ENCODE measurements at regions of chr15 and their contacts with region 1.

Region 1: DNA sequence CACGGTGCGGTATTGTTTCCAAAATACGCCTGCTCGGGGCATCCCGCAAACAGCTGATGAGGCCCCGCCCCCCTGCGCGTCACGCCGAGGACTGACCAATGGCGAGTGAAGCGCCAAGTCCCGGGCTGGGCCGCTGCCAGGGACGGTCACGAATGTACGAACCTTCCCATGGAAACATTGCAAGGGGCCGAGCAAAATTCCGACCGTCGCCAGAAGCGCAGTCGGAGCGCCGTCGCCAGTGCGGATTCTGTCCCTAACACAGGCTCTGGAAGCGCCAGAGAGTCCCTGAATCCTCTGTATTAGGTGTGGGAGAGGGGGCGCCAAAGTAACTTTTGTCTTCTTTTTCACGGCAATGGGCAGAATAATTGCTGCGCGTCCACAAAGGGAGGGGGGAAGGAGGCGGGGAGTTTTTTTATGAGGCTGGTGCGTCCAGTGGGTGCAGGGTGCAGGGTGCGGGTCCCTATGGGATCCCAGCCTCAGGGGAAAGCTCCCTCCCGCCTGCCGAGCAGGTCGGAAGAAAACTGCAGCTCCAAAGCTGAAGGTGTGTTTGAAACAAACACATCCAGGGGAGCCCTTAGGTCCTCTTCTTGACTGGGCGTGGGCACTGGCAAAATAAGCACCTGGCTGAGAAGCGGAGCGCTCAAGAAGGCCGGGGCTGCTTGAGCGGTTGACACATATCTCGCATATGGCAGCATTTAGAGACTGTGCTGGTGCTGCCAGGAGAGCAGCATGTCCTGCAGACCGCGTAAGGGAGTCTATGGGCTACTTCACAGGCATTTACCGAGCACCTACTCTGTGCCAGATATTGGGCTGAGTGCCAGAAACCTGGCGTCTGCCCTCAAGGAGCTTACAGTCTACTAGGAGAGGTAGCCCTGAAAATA is at the start of gene BMF:
- DNase-seq: peak; percentile 87 to 98 (median 90)
- ATAC-seq: peak; percentile 89
- H3K4me3 ChIP-seq: peak within 1 kb of the TSS; percentile 44
- H3K4me3 Mint-ChIP-seq: peak within 1 kb of the TSS; percentile 89 to 99 (median 94)
- H3K27ac ChIP-seq: peak within 1 kb of the TSS; percentile 52
- H3K27ac Mint-ChIP-seq: peak within 1 kb of the TSS; percentile 69 to 92 (median 80)
- H3K4me1 ChIP-seq: peaks cover 24 to 32% of the 10 kb centered on the region in 2 donors
- H3K4me1 Mint-ChIP-seq: peaks cover 35 to 56% (median 49%) of the 10 kb centered on the region in 7 donors
- H3K27me3 ChIP-seq: no peaks in the 10 kb centered on the region
- H3K27me3 Mint-ChIP-seq: peaks cover 0 to 19% (median 8%) of the 10 kb centered on the region in 5 donors
- total RNA-seq, gene BMF: 7.7 to 31.1 (median 19.6) TPM

Region 2: GRCh38 chr15:39934397-39935071 is 174.6 kb before region 1 on chr15:
- CTCF ChIA-PET with region 1: no interaction called
- POLR2A ChIA-PET with region 1: no interaction called
- intact Hi-C with region 1: loop called in 1 of 2 experiments (anchors 5 kb)
- DNase-seq: peak in 5 of 9 donors; percentile 5 to 14 (median 9)
- ATAC-seq: no peak
- H3K4me3 ChIP-seq: peak overlapping the region; percentile 76
- H3K4me3 Mint-ChIP-seq: peak overlapping the region; percentile 86 to 95 (median 89)
- H3K27ac ChIP-seq: peak overlapping the region; percentile 78
- H3K27ac Mint-ChIP-seq: peak overlapping the region; percentile 20 to 91 (median 64)
- H3K4me1 ChIP-seq: peaks cover 14 to 16% of the 10 kb centered on the region in 2 donors
- H3K4me1 Mint-ChIP-seq: peaks cover 28 to 50% (median 33%) of the 10 kb centered on the region in 7 donors
- H3K27me3 ChIP-seq: no peaks in the 10 kb centered on the region
- H3K27me3 Mint-ChIP-seq: peaks cover 0 to 6% (median 0%) of the 10 kb centered on the region in 5 donors

Region 3: DNA sequence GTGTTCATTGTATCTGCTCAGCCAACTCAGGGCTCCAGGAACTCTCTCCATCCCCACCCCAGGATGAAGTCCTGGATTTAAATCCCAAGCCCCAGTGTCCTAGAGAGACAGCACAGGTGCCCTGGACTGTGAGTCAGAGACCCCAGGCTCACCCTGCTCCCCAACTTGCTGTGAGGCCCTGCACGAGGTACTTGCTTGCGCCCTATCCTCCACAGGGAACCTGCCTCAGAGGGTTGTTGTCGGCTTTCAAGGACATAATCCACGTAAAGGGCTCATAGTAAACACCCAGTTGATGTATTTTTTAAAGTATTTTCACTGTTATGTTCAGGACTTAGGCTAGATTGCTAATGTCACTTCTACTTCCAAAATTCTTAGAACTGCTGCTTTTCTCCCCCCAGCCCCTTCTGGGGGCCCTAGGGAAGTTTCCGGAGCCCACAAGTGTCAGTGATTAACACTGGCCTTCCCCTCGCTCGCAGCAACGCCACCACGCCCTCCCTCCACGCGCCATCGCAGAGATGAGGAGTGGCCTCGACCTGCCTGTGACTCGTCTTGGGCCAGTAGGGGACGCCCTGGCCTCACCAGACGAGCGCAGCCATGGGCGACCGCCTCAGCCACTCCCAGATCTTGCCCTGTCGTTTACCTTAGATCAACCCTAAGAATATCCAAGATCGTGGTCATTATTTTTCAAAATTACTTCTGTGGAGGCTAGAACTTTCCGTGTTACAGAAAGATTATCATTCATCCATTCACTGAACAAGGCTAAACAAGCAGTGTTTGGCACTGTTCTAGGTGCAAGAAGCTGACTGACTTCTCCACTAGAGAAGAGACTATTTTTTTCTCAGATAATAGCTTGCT is 64.2 kb before region 1 on chr15:
- CTCF ChIA-PET with region 1: interaction called, 69 read pairs
- POLR2A ChIA-PET with region 1: interaction called, 18 read pairs
- intact Hi-C with region 1: loop called (anchors 1 kb)
- DNase-seq: peak; percentile 57 to 85 (median 74)
- ATAC-seq: peak; percentile 94
- H3K4me3 ChIP-seq: no peak overlapping the region
- H3K4me3 Mint-ChIP-seq: peak overlapping the region; percentile 16 to 76 (median 68)
- H3K27ac ChIP-seq: peak overlapping the region; percentile 53
- H3K27ac Mint-ChIP-seq: peak overlapping the region; percentile 34 to 88 (median 83)
- H3K4me1 ChIP-seq: peaks cover 40 to 50% of the 10 kb centered on the region in 2 donors
- H3K4me1 Mint-ChIP-seq: peaks cover 36 to 71% (median 62%) of the 10 kb centered on the region in 7 donors
- H3K27me3 ChIP-seq: no peaks in the 10 kb centered on the region
- H3K27me3 Mint-ChIP-seq: no peaks in the 10 kb centered on the region

Region 4: DNA sequence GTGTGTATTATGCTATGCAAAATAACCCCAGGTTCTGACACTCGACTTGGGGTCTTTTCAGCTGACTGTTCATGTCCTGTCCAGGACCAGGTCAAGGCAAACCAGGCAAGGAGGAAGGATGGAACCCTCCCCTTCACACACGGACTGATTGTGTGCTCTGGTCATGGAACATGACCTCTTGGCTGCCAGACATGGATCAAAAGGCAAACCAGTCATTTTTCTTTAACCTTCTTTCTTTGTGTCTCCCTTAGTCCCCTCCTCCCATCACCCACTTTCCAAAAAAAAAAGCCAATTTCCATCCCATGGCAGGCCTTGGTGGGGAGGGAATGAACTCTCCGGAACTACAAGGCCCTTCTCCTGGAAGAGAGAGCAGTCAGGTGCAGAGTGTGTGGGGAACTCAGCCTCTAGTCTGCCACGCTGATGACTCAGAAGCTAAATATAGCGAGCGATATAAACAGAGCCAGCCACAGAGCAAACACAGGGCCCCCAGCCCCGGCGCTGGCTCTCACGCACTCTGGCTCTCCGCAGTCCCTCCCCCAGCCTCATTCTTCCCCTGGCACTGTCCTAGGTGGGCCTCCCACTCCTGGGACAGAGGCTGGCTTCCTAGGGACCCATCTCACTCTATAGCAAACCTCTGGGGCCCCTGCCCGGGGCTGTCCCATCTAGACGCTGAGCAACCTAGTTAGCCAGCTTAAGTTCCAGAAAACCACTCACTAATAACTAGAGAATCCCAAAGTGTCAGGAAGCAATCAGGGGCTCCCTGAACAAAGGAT is 10.4 kb before region 1 on chr15:
- CTCF ChIA-PET with region 1: interaction called, 20 read pairs
- POLR2A ChIA-PET with region 1: interaction called, 11 read pairs
- intact Hi-C with region 1: loop called (anchors 1 kb)
- DNase-seq: peak in 5 of 9 donors; percentile 20 to 76 (median 48)
- ATAC-seq: peak; percentile 90
- H3K4me3 ChIP-seq: no peak overlapping the region
- H3K4me3 Mint-ChIP-seq: peak overlapping the region; percentile 55 to 86 (median 66)
- H3K27ac ChIP-seq: peak overlapping the region; percentile 14
- H3K27ac Mint-ChIP-seq: peak overlapping the region; percentile 28 to 97 (median 81)
- H3K4me1 ChIP-seq: peaks cover 35 to 37% of the 10 kb centered on the region in 2 donors
- H3K4me1 Mint-ChIP-seq: peaks cover 33 to 86% (median 56%) of the 10 kb centered on the region in 7 donors
- H3K27me3 ChIP-seq: no peaks in the 10 kb centered on the region
- H3K27me3 Mint-ChIP-seq: peaks cover 0 to 1% (median 0%) of the 10 kb centered on the region in 5 donors

Region 5: DNA sequence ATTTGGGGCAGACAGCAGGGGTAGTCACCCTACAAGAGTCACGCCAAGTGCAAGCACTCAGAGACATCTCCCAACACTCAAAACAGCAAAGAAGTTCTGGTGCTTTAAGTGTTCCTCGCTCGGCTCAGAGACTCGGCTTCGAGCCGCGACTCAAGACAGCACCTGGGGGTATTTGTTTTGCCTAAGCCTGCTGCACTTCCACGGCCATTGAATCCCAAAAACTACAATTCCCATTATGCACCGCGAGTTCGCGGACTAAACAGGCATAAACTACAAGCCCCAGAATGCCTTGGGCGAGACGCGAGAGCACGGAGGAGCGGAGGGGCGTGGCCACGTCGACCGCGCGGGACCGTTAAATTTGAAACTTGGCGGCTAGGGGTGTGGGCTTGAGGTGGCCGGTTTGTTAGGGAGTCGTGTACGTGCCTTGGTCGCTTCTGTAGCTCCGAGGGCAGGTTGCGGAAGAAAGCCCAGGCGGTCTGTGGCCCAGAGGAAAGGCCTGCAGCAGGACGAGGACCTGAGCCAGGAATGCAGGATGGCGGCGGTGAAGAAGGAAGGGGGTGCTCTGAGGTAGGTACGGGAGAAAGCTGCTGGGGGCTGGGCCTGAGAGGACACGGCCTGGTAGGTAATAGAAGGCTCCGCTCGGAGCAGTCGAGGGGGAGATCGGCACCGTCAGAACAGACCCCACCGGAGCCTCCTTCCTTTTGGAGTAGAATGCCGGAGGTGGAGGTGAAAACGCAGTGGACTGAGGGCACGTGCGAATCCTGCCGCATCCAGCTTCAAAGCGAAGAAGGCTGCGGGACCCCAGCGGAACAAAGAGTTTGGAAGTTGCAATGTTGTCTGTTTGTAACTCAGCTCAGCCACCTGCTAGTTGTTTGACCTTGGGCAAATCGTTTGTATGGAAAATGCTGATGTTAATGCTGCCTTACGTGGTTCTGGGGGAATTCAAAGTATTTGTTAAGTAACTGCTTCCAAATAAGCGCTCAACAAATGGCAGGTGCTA is 51.9 kb after region 1 on chr15 and contains the start of gene BUB1B:
- CTCF ChIA-PET with region 1: interaction called, 3 read pairs
- POLR2A ChIA-PET with region 1: interaction called, 3 read pairs
- intact Hi-C with region 1: loop called (anchors 1 kb)
- DNase-seq: peak; percentile 79 to 94 (median 92)
- ATAC-seq: peak; percentile 100
- H3K4me3 ChIP-seq: peak within 1 kb of the TSS; percentile 80
- H3K4me3 Mint-ChIP-seq: peak within 1 kb of the TSS in 2 of 10 donors; percentile 15 to 51
- H3K27ac ChIP-seq: peak within 1 kb of the TSS; percentile 29
- H3K27ac Mint-ChIP-seq: no peak within 1 kb of the TSS
- H3K4me1 ChIP-seq: peaks cover 0 to 7% of the 10 kb centered on the region in 2 donors
- H3K4me1 Mint-ChIP-seq: peaks cover 0 to 12% (median 0%) of the 10 kb centered on the region in 7 donors
- H3K27me3 ChIP-seq: no peaks in the 10 kb centered on the region
- H3K27me3 Mint-ChIP-seq: no peaks in the 10 kb centered on the region
- total RNA-seq, gene BUB1B: 0.41 to 55.7 (median 1.2) TPM

Region 6: DNA sequence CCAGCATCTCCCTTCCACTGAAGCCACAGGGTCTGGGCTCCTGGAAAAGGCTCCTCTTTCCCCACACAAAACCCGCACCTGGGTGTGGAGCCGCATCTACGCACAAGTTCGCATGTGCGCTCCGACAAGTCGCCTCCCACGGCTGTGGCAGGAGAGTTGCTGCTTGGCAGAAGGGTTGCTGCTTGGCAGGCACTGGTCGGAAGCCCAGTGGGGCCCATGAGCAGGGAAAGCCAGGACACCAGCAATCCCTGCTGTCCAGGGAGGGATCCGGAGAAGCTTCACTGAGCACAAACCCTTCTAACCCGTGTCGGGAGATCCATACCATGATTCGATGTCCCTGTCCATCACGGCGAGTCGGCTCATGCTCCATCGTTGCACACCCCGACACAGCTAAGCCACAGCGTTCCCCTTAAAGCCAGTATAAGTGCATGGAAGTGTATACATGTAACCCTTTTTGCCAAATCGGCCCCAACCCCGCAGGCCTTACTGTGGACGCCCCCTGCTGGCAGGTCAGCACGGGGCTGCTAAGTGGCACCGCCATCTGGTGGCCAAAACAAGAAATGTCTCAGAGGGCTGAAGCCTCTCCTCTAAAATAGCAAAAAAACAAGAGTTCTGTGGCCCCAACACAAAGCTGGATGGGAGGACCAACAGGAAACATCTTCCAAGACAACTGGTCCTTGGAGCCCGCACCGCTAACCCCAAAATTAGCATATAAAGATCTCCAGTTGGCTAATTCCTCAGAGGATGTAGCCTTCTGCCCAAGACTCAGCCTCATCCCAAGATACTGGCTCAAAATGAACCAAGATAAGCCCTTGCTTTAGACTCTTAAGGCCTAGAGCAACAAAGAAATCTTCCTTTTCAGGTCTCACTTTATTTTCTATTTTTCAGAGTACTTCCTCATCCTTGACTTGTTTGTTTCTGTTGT is 165.5 kb after region 1 on chr15:
- CTCF ChIA-PET with region 1: interaction called, 8 read pairs
- POLR2A ChIA-PET with region 1: no interaction called
- intact Hi-C with region 1: loop called in 1 of 2 experiments (anchors 2 kb)
- DNase-seq: peak; percentile 71 to 95 (median 88)
- ATAC-seq: peak; percentile 94
- H3K4me3 ChIP-seq: no peak overlapping the region
- H3K4me3 Mint-ChIP-seq: peak overlapping the region in 1 of 10 donors; percentile 45
- H3K27ac ChIP-seq: no peak overlapping the region
- H3K27ac Mint-ChIP-seq: peak overlapping the region in 6 of 9 donors; percentile 17 to 70 (median 50)
- H3K4me1 ChIP-seq: peaks cover 0 to 3% of the 10 kb centered on the region in 2 donors
- H3K4me1 Mint-ChIP-seq: peaks cover 0 to 17% (median 5%) of the 10 kb centered on the region in 7 donors
- H3K27me3 ChIP-seq: no peaks in the 10 kb centered on the region
- H3K27me3 Mint-ChIP-seq: peaks cover 12 to 29% (median 16%) of the 10 kb centered on the region in 5 donors